CD8-positive, alpha-beta T cell (primary cell): ENCODE measurements at regions of chr7 and their contacts with region 1.

Region 1: DNA sequence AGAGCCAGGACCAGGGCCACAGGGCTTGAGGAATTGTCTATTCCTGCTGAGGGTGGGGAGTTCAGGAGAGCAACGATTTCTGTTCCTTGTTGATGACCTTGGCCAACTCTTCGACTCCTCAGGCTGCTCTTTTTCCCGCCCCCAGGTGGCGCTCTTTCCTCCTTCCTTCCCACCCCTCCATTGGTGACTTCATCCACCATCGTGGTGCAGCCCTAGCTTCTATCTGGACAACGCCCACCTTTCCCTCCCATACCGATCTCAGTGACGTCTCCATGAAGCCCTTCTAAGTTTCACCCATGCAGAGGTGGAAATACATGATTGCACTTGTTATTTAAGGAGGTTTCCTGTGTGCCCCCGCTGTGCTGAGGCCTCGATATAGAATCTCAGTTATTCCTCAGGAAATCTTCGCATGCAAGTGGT is 22.1 kb upstream of the CARD11 start:
- DNase-seq: peak; percentile 28 to 84 (median 65)
- ATAC-seq: peak; percentile 45
- H3K4me3 ChIP-seq: no peak overlapping the region
- H3K4me3 Mint-ChIP-seq: peak overlapping the region; percentile 55
- H3K27ac ChIP-seq: peak overlapping the region in 1 of 2 experiments; percentile 83
- H3K27ac Mint-ChIP-seq: peak overlapping the region; percentile 85
- H3K4me1 ChIP-seq: peaks cover 86% of the 10 kb centered on the region
- H3K4me1 Mint-ChIP-seq: peaks cover 80% of the 10 kb centered on the region
- H3K27me3 ChIP-seq: no peaks in the 10 kb centered on the region
- H3K27me3 Mint-ChIP-seq: no peaks in the 10 kb centered on the region
- CTCF ChIP-seq: peak; percentile 61

Region 2: DNA sequence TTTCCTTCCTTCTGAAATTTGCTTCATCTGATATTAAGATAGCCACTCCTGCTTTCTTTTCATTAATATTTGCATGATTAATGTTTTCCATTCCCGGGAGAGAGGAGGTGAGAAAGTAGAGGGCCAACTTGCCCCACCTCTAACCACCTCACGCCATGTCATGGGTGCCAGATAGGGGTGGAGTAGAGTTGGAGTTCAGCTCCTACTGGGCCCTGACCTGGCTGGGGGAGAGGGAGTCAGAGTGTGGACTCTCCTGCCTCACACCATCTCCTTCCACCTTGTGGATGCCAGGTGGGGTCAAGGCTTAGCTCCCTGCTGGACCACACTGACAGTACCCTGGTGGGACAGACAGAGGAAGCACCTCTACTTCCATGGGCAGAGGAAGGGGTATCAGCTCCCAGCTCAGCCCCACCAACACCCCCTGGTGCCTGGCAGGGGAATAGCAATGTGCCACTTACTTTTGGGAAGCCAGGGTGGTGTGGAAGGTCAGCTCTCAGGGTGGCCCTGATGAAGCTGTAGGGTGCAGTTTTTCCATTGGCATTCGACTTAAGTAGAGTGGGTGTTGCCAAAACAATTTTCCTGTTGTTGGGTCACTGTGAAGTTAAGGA is 634.4 kb before region 1 on chr7:
- CTCF ChIA-PET with region 1: no interaction called
- POLR2A ChIA-PET with region 1: no interaction called
- intact Hi-C with region 1: no loop called
- DNase-seq: peak; percentile 16 to 68 (median 47)
- ATAC-seq: peak; percentile 88
- H3K4me3 ChIP-seq: no peak overlapping the region
- H3K4me3 Mint-ChIP-seq: no peak overlapping the region
- H3K27ac ChIP-seq: peak overlapping the region in 1 of 2 experiments; percentile 17
- H3K27ac Mint-ChIP-seq: peak overlapping the region; percentile 0
- H3K4me1 ChIP-seq: no peaks in the 10 kb centered on the region
- H3K4me1 Mint-ChIP-seq: peaks cover 8% of the 10 kb centered on the region
- H3K27me3 ChIP-seq: no peaks in the 10 kb centered on the region
- H3K27me3 Mint-ChIP-seq: no peaks in the 10 kb centered on the region
- CTCF ChIP-seq: peak; percentile 55

Region 3: GRCh38 chr7:2978403-2978802 is 87.3 kb before region 1 on chr7:
- CTCF ChIA-PET with region 1: interaction called, 4 read pairs
- POLR2A ChIA-PET with region 1: interaction called, 4 read pairs
- intact Hi-C with region 1: loop called in 1 of 2 experiments (anchors 10 kb)
- DNase-seq: peak; percentile 19 to 90 (median 71)
- ATAC-seq: peak; percentile 62
- H3K4me3 ChIP-seq: peak overlapping the region; percentile 40
- H3K4me3 Mint-ChIP-seq: peak overlapping the region; percentile 85
- H3K27ac ChIP-seq: peak overlapping the region; percentile 34 to 81
- H3K27ac Mint-ChIP-seq: peak overlapping the region; percentile 95
- H3K4me1 ChIP-seq: peaks cover 60% of the 10 kb centered on the region
- H3K4me1 Mint-ChIP-seq: peaks cover 70% of the 10 kb centered on the region
- H3K27me3 ChIP-seq: no peaks in the 10 kb centered on the region
- H3K27me3 Mint-ChIP-seq: no peaks in the 10 kb centered on the region
- CTCF ChIP-seq: no peak

Region 4: DNA sequence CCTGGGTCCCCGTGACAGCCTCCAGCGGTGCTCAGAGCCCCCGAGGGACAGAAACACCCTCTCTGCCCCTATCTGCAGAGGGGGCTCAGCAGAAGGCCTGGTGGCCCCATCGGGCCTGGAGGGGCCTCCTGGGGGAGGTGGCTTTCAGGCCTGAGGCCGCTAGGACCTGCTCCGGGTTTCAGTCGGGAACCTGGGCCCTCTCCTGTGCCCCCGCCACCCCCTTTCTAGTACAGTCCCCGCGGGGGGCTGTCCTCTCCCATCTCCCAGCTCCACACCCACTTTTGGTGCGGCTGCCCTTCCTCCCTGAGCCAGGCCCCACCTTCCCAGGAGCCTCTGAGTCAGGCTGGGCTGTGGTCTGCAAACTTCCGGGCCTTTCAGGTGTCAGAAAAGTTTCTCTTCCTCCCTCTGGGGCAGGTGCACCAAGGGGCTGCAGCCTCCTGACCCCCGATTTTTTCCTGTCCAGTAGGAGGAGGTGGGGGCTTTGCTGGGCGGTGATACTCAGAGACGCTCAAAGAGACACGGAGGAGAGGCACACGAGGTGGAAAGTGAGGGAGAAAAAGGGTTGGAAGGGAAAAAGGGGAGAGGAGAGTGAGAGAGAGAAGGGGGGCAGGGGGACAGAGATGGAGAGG is 22.8 kb before region 1 on chr7:
- CTCF ChIA-PET with region 1: interaction called, 20 read pairs
- POLR2A ChIA-PET with region 1: interaction called, 5 read pairs
- intact Hi-C with region 1: loop called (anchors 1 to 2 kb)
- DNase-seq: peak; percentile 20 to 82 (median 73)
- ATAC-seq: peak; percentile 61
- H3K4me3 ChIP-seq: peak overlapping the region; percentile 84 to 96
- H3K4me3 Mint-ChIP-seq: peak overlapping the region; percentile 92
- H3K27ac ChIP-seq: peak overlapping the region; percentile 84 to 88
- H3K27ac Mint-ChIP-seq: peak overlapping the region; percentile 94
- H3K4me1 ChIP-seq: peaks cover 49% of the 10 kb centered on the region
- H3K4me1 Mint-ChIP-seq: peaks cover 59% of the 10 kb centered on the region
- H3K27me3 ChIP-seq: no peaks in the 10 kb centered on the region
- H3K27me3 Mint-ChIP-seq: no peaks in the 10 kb centered on the region
- CTCF ChIP-seq: no peak

Region 5: GRCh38 chr7:3112479-3113134 is 46.9 kb after region 1 on chr7:
- CTCF ChIA-PET with region 1: interaction called, 6 read pairs
- POLR2A ChIA-PET with region 1: interaction called, 3 read pairs
- intact Hi-C with region 1: loop called (anchors 2 to 10 kb)
- DNase-seq: peak in 4 of 9 experiments; percentile 34 to 62 (median 52)
- ATAC-seq: peak; percentile 57
- H3K4me3 ChIP-seq: no peak overlapping the region
- H3K4me3 Mint-ChIP-seq: peak overlapping the region; percentile 46
- H3K27ac ChIP-seq: peak overlapping the region in 1 of 2 experiments; percentile 42
- H3K27ac Mint-ChIP-seq: peak overlapping the region; percentile 85
- H3K4me1 ChIP-seq: peaks cover 53% of the 10 kb centered on the region
- H3K4me1 Mint-ChIP-seq: peaks cover 77% of the 10 kb centered on the region
- H3K27me3 ChIP-seq: no peaks in the 10 kb centered on the region
- H3K27me3 Mint-ChIP-seq: no peaks in the 10 kb centered on the region
- CTCF ChIP-seq: no peak

Region 6: DNA sequence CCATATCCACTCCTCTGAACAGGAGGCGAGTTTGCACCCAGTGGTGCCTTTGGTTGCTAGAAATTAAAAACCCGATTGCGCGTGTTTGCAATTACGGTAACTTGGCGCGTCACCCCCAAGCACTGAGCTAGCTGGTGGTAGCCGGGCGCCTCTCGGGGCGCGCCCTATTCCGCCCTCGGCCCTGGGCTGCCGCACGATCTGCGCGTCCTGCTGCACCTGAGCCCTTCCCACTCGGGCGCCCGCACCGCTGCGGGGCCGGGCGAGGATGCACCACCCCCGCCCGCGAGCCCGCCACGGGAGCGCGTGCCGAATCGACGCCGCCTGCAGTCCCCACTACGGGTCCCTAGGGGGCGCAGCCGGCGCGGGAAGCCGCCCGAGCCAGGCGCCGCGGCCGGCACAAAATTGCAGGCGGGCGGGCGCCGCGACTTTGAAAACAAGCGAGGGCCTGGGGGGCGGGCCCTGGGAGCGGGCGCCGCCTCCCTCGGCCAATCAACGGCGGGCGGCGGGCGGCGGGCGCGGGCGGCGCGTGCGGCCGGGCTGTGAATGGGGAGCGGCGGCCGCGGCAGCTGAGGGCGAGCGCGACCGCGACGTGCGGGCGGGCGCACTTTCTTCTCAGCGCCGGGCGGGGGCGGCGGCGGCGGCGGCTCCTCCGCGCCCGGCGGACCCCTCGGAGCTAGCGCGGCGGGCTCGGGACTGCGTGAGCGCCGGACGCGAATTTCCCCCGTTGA is 235.1 kb after region 1 on chr7 and contains the start of gene SDK1:
- CTCF ChIA-PET with region 1: no interaction called
- POLR2A ChIA-PET with region 1: no interaction called
- intact Hi-C with region 1: loop called in 1 of 2 experiments (anchors 10 kb)
- DNase-seq: peak; percentile 80 to 96 (median 90)
- ATAC-seq: peak; percentile 82
- H3K4me3 ChIP-seq: peak within 1 kb of the TSS; percentile 33 to 54
- H3K4me3 Mint-ChIP-seq: peak within 1 kb of the TSS; percentile 86
- H3K27ac ChIP-seq: no peak within 1 kb of the TSS
- H3K27ac Mint-ChIP-seq: no peak within 1 kb of the TSS
- H3K4me1 ChIP-seq: peaks cover 17% of the 10 kb centered on the region
- H3K4me1 Mint-ChIP-seq: peaks cover 15% of the 10 kb centered on the region
- H3K27me3 ChIP-seq: peaks cover 3 to 4% of the 10 kb centered on the region in 2 experiments
- H3K27me3 Mint-ChIP-seq: peaks cover 16% of the 10 kb centered on the region
- CTCF ChIP-seq: peak; percentile 79
- total RNA-seq, gene SDK1: 0.24 to 0.36 TPM